Left cardiac atrium (tissue), 4 donors: ENCODE measurements at regions of chr12 and their contacts with region 1.

Region 1: DNA sequence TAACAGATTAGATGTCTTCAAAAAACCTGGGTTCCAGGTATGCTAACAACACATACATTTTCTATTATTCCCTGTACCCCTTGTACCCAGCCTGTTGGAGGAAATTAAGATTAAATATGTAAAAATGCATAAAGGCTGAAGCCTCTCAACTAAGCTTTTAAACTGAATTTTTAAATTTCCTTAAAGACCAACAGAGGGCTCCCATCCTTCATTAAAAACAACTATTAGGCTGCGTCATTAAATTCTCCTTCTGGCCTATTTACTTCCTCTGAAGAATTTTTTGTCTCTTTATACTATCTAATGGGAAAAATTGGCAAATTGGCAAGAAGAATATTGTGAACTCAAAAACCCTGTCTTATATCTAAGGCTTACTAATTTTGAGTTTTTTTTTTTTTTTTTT is 21.8 kb downstream of the SENP1 start:
- DNase-seq: no peak
- ATAC-seq: peak; percentile 34 to 39

Region 2: DNA sequence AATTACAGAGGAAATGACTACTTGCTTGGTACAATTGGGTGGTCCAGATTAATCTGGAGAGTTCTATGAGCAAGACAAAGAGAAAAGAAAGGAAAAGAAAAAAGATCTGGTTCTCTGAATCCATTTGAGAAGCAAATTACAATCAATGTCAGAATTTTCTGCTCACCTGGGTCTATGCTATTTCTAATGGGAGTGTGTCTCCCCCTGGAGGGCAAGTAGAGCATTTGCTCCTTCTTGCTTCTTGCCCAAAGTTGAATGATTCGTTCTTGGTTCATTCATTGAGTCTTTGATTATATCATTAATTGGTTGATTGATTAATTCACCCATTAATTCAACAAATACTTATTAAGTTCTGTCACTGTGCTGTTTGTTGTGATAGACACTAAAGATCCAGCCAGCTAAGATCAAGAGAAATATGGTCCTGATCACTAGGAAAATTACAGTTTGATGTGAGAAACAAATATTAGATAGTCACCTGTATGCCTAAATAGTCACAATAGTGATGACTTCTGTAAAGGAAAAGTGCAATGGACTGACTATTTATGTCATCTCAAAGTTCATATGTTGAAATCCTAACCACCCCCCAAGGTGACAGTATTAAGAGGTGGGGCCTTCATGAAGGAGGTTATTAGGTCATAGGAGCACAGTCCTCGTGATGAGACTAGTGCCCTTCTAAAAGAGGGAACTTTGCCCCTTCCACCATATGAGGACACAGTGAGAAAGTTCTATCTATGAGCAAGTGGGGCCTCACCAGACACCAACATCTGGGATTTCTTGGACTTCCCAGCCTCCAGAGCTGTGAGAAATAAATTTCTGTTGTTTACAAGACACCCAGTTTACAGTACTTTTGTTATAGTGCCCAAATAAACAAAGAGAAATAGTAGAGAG is 81.3 kb after region 1 on chr12:
- intact Hi-C with region 1: loop called (anchors 5 kb)
- DNase-seq: no peak
- ATAC-seq: peak in 1 of 2 donors; percentile 57

Region 3: DNA sequence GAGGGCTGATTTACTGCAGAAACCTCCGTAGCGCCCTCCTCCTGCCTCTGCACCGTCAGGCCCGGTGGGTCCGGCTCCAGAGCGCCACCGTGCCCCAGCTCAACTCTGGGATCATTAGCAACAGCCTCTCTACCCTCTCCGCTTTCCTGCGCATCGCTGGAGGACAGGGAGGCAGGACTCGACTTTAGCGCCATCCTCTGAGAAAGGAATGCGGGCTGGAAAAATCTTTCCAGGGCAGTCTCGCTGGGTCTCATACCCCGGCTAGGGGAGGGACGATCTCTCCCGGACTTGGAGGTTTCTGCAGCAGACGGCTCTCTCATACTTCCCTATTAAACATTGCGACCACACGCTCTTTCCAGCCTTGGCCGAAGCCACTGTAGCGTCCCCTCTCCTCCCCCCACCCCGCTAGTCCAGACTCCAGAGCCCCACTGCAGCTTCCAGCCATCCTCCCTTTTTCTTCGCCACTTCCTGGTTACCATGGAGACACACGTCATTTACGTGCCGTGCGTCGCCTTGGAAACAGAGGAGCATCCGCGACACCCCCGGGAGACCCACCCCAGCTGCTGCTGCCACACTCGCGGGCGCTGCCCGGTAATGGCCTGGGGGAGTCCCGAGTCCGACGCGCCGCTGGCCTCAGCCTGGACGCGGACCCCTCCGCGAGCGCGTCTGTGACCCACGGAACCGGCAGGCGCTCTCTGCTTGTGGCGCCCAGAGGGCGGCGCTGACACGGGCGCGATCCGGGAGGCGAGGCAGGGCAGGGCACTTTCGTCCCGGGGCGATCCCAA is 99.2 kb after region 1 on chr12 and contains the start of gene CCDC184:
- intact Hi-C with region 1: no loop called
- DNase-seq: peak; percentile 72
- ATAC-seq: peak; percentile 74 to 87
- total RNA-seq, gene CCDC184: 1.2 to 1.4 TPM

Region 4: DNA sequence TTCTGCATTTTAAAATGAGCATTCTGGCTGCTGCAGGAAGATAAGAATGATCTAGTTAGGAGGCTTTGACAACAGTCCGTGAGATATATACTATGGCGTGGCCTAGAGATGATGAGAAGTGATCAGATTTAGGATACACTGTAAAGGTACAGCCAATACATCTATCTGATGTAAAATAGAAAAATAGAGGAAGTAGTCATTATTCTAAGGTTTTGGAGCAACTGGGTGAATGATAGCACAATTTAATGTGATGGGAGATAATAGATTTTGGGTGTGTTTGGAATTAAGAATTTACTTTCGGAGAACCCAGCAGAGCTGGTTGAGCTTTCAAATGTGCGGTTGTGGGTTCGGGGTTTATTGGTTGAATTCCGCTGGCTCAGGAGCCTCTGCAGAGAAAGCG is 388.2 kb after region 1 on chr12 and contains the start of gene ANP32D:
- intact Hi-C with region 1: no loop called
- DNase-seq: no peak
- ATAC-seq: no peak
- total RNA-seq, gene ANP32D: not detected

Region 5: DNA sequence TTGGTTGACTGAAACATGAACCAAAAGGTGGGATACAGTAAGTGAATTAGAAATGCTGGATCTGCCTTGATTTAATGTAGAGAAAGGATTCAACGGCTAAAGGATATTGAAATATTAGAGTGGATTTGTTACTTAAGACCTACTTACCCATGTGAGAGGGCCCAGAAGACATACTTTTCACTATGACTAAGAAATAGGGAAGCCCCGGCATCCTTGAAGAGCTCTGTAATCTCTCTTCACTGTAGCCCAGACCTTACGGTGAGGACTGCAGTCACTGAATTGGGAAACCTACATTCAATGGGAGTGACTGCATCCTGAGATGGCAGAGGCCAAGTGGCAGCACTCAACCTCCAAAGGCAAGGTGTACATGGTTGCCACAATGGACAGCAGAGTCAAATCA is 545.5 kb after region 1 on chr12:
- intact Hi-C with region 1: loop called in 1 of 2 experiments (anchors 10 kb)
- DNase-seq: no peak
- ATAC-seq: no peak